ENCODE measurements at regions of chr14 and their contacts with region 1.

Region 1: GRCh38 chr14:61475316-61475715 is 153.9 kb downstream of the PRKCH start:
- DNase-seq: no peak
- ATAC-seq: peak in 1 of 2 donors; percentile 33
- H3K4me3 ChIP-seq: no peak overlapping the region
- H3K27ac ChIP-seq: peak overlapping the region; percentile 69 to 81 (median 74)
- H3K4me1 ChIP-seq: peaks cover 27 to 60% of the 10 kb centered on the region in 2 donors
- H3K27me3 ChIP-seq: no peaks in the 10 kb centered on the region
- CTCF ChIP-seq: peak; percentile 53 to 74 (median 61)
- POLR2A ChIP-seq: no peak

Region 2: DNA sequence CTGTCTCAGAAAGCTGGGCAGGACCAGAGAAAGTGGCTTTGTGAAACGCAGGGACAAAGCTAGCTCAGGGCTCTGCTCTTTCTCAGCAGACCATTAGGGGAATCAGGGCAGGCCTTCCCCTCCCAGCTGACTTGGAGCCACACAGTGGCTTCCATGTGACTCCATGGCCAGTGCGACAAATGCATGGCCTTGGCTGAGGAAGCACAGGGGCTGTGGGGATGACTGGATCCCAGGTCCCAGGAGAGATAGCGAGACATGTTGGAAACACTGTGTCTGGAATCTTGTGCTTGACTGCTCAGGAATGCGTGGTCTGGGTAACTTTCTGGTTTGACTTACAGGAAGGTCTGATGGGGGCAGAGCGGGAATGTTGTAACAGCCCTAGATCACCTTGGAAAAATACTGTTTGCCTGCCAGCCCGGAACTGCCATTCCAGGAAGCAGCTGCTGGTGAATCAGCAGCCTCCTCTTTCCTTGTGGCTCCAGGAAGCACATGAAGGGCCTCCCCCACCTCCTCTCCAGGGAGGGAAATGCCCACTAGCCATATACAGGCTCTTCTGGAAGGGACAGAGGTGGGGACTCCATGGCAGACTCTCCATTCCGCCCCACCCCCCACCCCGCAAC is 86.5 kb after region 1 on chr14:
- in situ Hi-C with region 1: no loop called
- intact Hi-C with region 1: loop called (anchors 5 kb)
- DNase-seq: peak; percentile 65 to 66
- ATAC-seq: peak; percentile 75 to 78
- H3K4me3 ChIP-seq: no peak overlapping the region
- H3K27ac ChIP-seq: peak overlapping the region; percentile 32 to 82 (median 72)
- H3K4me1 ChIP-seq: peaks cover 19 to 41% of the 10 kb centered on the region in 2 donors
- H3K27me3 ChIP-seq: no peaks in the 10 kb centered on the region
- CTCF ChIP-seq: no peak
- POLR2A ChIP-seq: peak in 1 of 2 donors; percentile 9

Region 3: GRCh38 chr14:61730756-61731373 is 255.5 kb after region 1 on chr14:
- in situ Hi-C with region 1: loop called in 2 of 4 experiments (anchors 5 to 25 kb)
- intact Hi-C with region 1: no loop called
- DNase-seq: no peak
- ATAC-seq: no peak
- H3K4me3 ChIP-seq: no peak overlapping the region
- H3K27ac ChIP-seq: no peak overlapping the region
- H3K4me1 ChIP-seq: no peaks in the 10 kb centered on the region
- H3K27me3 ChIP-seq: no peaks in the 10 kb centered on the region
- CTCF ChIP-seq: peak in 4 of 5 experiments; percentile 20 to 49 (median 40)
- POLR2A ChIP-seq: no peak

Region 4: DNA sequence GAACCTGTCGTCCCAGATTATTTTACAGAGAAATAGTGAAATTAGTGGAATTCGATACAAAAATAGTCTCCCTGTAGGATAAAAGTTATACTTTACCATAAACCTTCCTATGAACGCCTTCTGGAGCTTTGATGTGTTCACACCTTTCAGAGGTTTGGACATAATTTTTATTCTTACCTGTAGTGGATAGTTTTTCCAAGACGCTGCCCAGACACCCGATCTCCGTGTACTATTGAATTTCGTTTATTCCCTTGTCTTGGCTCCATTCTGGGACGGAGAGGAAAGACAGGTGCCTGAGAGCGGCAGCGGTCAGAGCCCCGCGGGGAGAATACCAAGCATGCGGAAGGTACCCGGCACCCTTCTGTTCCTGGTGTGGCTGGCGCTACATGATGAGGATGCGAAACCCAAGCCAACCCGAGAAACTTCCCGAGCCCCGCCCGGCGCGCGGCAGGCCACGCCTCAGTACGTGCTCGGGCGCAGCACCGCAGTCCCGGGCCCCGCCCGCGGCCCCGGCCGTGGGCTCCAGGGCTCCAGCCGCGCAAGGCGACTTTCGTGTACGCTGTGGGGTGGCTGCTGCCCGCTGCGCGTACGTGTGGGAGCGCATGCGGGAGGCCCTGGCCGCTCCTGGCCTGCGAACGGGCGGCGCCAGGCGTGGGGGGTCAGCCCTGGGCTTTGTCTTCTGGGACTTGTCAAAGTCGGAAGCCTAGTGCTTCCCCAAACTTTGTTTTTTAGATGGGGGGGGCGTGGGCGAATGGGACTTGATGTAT is 275.6 kb after region 1 on chr14:
- in situ Hi-C with region 1: loop called in 1 of 4 experiments (anchors 25 kb)
- intact Hi-C with region 1: loop called (anchors 5 kb)
- DNase-seq: peak; percentile 86 to 90
- ATAC-seq: peak; percentile 92 to 94
- H3K4me3 ChIP-seq: peak overlapping the region; percentile 58 to 73 (median 70)
- H3K27ac ChIP-seq: peak overlapping the region; percentile 78 to 93 (median 91)
- H3K4me1 ChIP-seq: peaks cover 24 to 40% of the 10 kb centered on the region in 2 donors
- H3K27me3 ChIP-seq: no peaks in the 10 kb centered on the region
- CTCF ChIP-seq: no peak
- POLR2A ChIP-seq: peak; percentile 83 to 90

Region 5: GRCh38 chr14:61837336-61838229 is 362.3 kb after region 1 on chr14:
- in situ Hi-C with region 1: no loop called
- intact Hi-C with region 1: loop called (anchors 5 kb)
- DNase-seq: peak; percentile 48 to 56
- ATAC-seq: peak; percentile 81 to 97
- H3K4me3 ChIP-seq: no peak overlapping the region
- H3K27ac ChIP-seq: no peak overlapping the region
- H3K4me1 ChIP-seq: no peaks in the 10 kb centered on the region
- H3K27me3 ChIP-seq: no peaks in the 10 kb centered on the region
- CTCF ChIP-seq: peak; percentile 78 to 94 (median 86)
- POLR2A ChIP-seq: no peak